Naive thymus-derived CD4-positive, alpha-beta T cell (primary cell): ENCODE measurements at regions of chr10 and their contacts with region 1.

Region 1: GRCh38 chr10:75111367-75111906 is at the start of gene SAMD8:
- DNase-seq: peak; percentile 90 to 98 (median 94)
- ATAC-seq: peak; percentile 92
- H3K4me3 ChIP-seq: peak within 1 kb of the TSS; percentile 90
- H3K4me3 Mint-ChIP-seq: peak within 1 kb of the TSS; percentile 81 to 98 (median 90)
- H3K27ac ChIP-seq: peak within 1 kb of the TSS; percentile 89
- H3K27ac Mint-ChIP-seq: peak within 1 kb of the TSS; percentile 86 to 98 (median 94)
- H3K4me1 ChIP-seq: peaks cover 14 to 16% of the 10 kb centered on the region in 2 donors
- H3K4me1 Mint-ChIP-seq: peaks cover 33 to 66% (median 62%) of the 10 kb centered on the region in 7 donors
- H3K27me3 ChIP-seq: no peaks in the 10 kb centered on the region
- H3K27me3 Mint-ChIP-seq: no peaks in the 10 kb centered on the region
- total RNA-seq, gene SAMD8: 14.8 to 31.7 (median 17.5) TPM

Region 2: DNA sequence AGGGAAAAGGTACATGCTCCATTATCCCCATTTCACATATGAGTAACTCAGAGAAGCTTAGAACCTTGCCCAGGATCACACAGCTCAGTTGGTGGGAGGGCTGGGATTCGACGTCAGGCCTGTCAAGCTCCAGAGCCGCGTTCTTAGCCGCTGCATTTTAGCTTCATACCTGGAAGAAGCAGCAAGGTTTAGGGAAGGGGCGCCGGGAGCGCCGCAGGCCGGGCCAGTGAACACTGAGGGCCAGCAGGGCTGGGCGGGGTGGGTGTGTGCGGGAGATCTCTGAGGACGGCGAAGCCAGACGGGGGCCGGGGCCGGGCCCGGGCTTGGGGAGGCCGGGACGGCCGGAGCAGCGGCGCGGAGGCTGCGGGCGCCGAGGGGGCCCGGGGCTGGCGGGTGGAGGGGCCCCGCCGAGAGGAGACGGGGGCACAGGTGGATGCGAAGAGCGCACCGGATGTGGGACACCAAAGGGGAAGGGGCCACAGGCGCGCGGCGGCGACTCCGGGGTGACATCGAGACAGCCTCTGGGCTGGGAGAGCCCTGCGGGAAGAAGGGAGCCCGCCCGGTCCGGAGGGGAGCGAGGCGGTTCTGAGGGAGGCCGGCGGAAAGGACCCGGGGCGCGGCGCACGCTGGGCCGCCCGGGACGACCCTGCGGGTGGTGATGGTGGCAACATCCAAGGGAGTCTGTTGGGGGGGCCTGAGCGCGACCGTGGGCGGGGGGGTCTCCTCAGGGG is 1300.5 kb before region 1 on chr10:
- CTCF ChIA-PET with region 1: no interaction called
- POLR2A ChIA-PET with region 1: no interaction called
- intact Hi-C with region 1: loop called in 1 of 2 experiments (anchors 2 kb)
- DNase-seq: peak; percentile 46 to 76 (median 71)
- ATAC-seq: peak; percentile 18
- H3K4me3 ChIP-seq: peak overlapping the region; percentile 69
- H3K4me3 Mint-ChIP-seq: peak overlapping the region; percentile 88 to 97 (median 94)
- H3K27ac ChIP-seq: peak overlapping the region; percentile 97
- H3K27ac Mint-ChIP-seq: peak overlapping the region; percentile 94 to 98 (median 96)
- H3K4me1 ChIP-seq: peaks cover 26 to 31% of the 10 kb centered on the region in 2 donors
- H3K4me1 Mint-ChIP-seq: peaks cover 31 to 54% (median 49%) of the 10 kb centered on the region in 7 donors
- H3K27me3 ChIP-seq: no peaks in the 10 kb centered on the region
- H3K27me3 Mint-ChIP-seq: no peaks in the 10 kb centered on the region

Region 3: GRCh38 chr10:73997787-73998622 is 1113.4 kb before region 1 on chr10 and contains the start of gene VCL:
- CTCF ChIA-PET with region 1: no interaction called
- POLR2A ChIA-PET with region 1: no interaction called
- intact Hi-C with region 1: loop called (anchors 2 to 10 kb)
- DNase-seq: peak; percentile 90 to 97 (median 95)
- ATAC-seq: peak; percentile 99
- H3K4me3 ChIP-seq: peak within 1 kb of the TSS; percentile 71
- H3K4me3 Mint-ChIP-seq: peak within 1 kb of the TSS; percentile 83 to 100 (median 97)
- H3K27ac ChIP-seq: peak within 1 kb of the TSS; percentile 91
- H3K27ac Mint-ChIP-seq: peak within 1 kb of the TSS; percentile 83 to 99 (median 98)
- H3K4me1 ChIP-seq: peaks cover 19 to 22% of the 10 kb centered on the region in 2 donors
- H3K4me1 Mint-ChIP-seq: peaks cover 43 to 53% (median 48%) of the 10 kb centered on the region in 7 donors
- H3K27me3 ChIP-seq: no peaks in the 10 kb centered on the region
- H3K27me3 Mint-ChIP-seq: no peaks in the 10 kb centered on the region
- total RNA-seq, gene VCL: 9.0 to 67.7 (median 21.6) TPM

Region 4: DNA sequence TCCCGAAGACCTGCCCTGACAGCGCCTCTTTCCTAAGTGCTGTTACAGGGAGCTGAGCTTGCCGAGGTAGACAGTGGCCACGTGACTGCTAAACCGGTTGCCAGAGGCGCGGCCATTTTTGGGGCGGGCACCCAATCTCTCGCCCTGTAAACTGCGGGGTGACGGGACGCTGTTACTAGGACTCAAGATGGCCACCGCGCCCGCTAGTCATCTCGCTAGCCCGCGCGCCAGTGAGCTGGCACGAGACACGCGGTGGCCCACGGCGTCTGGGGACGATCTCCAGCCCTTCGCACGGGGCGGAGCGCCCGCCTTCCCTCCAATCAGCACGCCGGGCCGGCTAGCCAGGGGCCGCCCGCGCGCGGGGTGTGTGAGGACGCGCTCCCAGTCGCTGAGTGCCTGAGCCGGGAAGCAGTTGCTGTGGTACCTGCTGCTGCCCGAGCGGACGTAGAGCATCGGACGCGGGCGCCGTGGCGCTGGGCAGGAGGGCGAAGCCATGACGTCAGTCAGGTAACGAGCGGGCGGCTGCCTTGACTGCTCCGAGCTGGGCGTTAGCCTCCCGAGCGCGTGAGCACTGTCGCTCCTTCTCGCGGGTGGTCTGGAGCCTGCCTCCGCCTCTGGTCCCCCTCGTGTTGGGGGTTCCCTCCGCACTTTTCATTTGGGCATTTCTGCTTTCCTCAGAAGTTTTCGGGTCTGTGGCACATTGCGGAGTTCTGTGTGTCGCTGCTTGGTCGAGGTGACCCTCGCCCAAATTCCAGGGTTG is 934.9 kb before region 1 on chr10:
- CTCF ChIA-PET with region 1: no interaction called
- POLR2A ChIA-PET with region 1: interaction called, 3 read pairs
- intact Hi-C with region 1: loop called in 1 of 2 experiments (anchors 2 kb)
- DNase-seq: peak; percentile 90 to 96 (median 95)
- ATAC-seq: peak; percentile 98
- H3K4me3 ChIP-seq: peak overlapping the region; percentile 84
- H3K4me3 Mint-ChIP-seq: peak overlapping the region; percentile 87 to 98 (median 93)
- H3K27ac ChIP-seq: peak overlapping the region; percentile 86
- H3K27ac Mint-ChIP-seq: peak overlapping the region; percentile 94 to 98 (median 97)
- H3K4me1 ChIP-seq: peaks cover 6 to 7% of the 10 kb centered on the region in 2 donors
- H3K4me1 Mint-ChIP-seq: peaks cover 14 to 46% (median 40%) of the 10 kb centered on the region in 7 donors
- H3K27me3 ChIP-seq: no peaks in the 10 kb centered on the region
- H3K27me3 Mint-ChIP-seq: no peaks in the 10 kb centered on the region

Region 5: DNA sequence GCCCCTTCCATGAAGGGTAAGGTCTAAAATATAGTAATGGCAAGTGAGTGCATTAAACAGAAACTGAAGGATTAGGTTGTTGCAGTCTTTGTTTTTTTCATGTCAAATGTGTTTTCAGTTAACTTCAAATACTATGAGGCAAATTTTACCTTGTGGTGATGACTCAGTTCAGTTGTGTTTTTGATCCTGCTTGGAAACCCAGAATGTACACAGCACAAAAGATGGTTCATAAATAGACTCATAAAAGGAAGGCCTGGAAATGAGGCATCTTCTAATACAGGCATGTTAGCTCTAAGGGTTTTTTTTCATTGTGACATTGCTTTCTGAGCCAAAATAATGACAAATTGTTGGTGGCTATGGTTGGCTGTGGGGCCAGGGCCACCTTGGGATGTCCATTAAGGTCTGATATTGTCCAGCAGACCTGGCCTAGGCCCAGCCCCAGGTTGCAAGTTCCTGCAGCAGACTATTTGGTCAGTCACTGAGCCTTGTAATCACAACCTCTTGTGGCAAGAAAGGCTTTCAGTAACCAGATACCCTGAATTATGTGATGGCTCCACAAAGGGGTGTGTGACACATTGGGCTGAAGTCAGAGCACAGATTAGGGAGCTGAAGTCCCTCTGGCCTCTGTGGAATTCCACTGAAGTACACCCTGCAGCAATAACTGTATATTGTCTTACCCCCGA is 69.0 kb before region 1 on chr10:
- CTCF ChIA-PET with region 1: no interaction called
- POLR2A ChIA-PET with region 1: interaction called, 3 read pairs
- intact Hi-C with region 1: loop called in 1 of 2 experiments (anchors 5 kb)
- DNase-seq: no peak
- ATAC-seq: no peak
- H3K4me3 ChIP-seq: no peak overlapping the region
- H3K4me3 Mint-ChIP-seq: no peak overlapping the region
- H3K27ac ChIP-seq: no peak overlapping the region
- H3K27ac Mint-ChIP-seq: peak overlapping the region in 1 of 9 donors; percentile 69
- H3K4me1 ChIP-seq: no peaks in the 10 kb centered on the region
- H3K4me1 Mint-ChIP-seq: peaks cover 3 to 38% (median 7%) of the 10 kb centered on the region in 7 donors
- H3K27me3 ChIP-seq: no peaks in the 10 kb centered on the region
- H3K27me3 Mint-ChIP-seq: peaks cover 0 to 18% (median 8%) of the 10 kb centered on the region in 5 donors

Region 6: DNA sequence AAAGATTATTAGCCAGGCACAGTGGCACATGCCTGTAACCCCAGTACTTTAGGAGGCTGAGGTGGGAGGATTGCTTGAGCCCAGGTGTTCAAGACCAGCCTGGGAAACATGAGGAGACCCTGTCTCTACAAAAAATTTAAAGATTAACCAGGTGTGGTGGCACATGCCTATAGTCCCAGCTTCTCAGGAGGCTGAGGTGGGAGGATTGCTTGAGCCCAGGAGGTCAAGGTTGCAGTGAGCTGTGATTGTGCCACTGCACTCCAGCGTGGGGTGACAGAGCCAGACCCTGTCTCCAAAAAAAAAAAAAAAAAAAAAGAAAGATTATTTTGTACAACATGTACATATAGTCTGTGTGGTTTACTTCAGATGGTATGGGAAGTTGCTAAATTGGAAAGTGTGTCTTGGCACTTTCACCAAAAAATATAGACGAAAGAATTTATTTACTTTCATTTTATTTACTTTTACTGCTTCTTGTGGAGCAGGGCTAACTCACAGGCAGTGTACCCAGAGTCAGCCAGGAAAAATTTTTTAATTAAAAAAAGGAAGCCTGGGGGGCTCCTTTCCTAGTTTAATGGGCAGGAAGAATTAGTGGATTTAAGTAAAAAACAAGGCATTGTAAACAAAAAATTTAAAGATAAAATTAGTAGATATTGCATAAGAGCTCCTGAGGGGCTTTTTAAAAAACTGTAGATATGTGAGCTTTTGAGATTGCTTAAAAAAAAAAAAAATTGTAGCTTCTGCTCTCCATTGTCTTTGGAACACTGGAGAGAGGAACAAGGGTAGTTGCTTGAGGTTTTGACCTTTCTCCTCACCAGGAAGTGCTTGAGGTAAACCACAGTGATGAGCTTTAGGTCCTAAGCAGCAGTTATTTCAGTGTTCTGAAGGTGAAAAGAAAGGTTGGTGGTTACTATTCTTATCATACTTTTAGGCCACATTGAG is 54.5 kb after region 1 on chr10:
- CTCF ChIA-PET with region 1: interaction called, 4 read pairs
- POLR2A ChIA-PET with region 1: no interaction called
- intact Hi-C with region 1: loop called (anchors 1 to 5 kb)
- DNase-seq: peak in 5 of 9 donors; percentile 7 to 35 (median 12)
- ATAC-seq: peak; percentile 75
- H3K4me3 ChIP-seq: peak overlapping the region; percentile 11
- H3K4me3 Mint-ChIP-seq: peak overlapping the region; percentile 64 to 86 (median 73)
- H3K27ac ChIP-seq: peak overlapping the region; percentile 66
- H3K27ac Mint-ChIP-seq: peak overlapping the region; percentile 78 to 91 (median 86)
- H3K4me1 ChIP-seq: peaks cover 22 to 31% of the 10 kb centered on the region in 2 donors
- H3K4me1 Mint-ChIP-seq: peaks cover 38 to 68% (median 50%) of the 10 kb centered on the region in 7 donors
- H3K27me3 ChIP-seq: no peaks in the 10 kb centered on the region
- H3K27me3 Mint-ChIP-seq: no peaks in the 10 kb centered on the region

Region 7: DNA sequence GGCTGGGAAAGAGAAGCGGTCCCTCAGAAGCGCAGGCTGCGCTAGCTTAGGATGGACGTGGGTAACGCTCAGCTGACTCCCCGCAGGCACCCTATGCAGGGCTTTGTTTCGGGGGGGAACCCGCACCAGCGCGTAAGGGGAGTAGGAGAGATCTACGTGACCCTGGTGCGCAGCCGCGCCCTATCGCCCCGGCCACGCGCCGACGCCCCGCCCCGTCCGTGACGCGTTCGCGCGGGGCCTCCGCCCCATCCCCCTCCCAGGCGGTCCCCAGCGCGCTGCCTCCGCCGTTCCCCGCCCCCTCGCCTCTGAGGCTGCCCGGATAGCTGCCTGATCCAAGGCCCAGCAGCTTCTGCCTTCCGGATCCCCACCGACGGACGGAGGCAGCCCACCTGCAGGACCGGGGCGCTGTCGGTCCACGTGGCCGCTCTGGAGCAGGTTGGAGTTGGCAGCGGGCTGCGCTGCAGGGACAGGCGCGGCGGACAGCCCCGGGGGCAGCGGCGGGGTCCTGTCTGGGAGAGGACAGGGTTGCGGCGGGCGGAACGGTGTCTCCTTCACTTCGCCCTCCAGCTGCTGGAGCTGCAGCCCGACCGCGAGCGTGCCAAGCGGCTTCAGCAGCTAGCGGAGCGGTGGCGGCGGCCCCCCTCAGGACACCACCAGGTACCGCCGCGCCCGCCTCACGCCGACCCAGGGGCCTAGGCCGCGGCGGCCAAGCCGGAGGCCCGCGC is 99.0 kb after region 1 on chr10 and contains the start of gene VDAC2:
- CTCF ChIA-PET with region 1: no interaction called
- POLR2A ChIA-PET with region 1: interaction called, 28 read pairs
- intact Hi-C with region 1: loop called (anchors 1 kb)
- DNase-seq: peak; percentile 92 to 100 (median 98)
- ATAC-seq: peak; percentile 92
- H3K4me3 ChIP-seq: peak within 1 kb of the TSS; percentile 81
- H3K4me3 Mint-ChIP-seq: peak within 1 kb of the TSS; percentile 87 to 100 (median 98)
- H3K27ac ChIP-seq: peak within 1 kb of the TSS; percentile 96
- H3K27ac Mint-ChIP-seq: peak within 1 kb of the TSS; percentile 99 to 100 (median 100)
- H3K4me1 ChIP-seq: peaks cover 15 to 21% of the 10 kb centered on the region in 2 donors
- H3K4me1 Mint-ChIP-seq: peaks cover 21 to 44% (median 29%) of the 10 kb centered on the region in 7 donors
- H3K27me3 ChIP-seq: no peaks in the 10 kb centered on the region
- H3K27me3 Mint-ChIP-seq: no peaks in the 10 kb centered on the region
- total RNA-seq, gene VDAC2: 82.8 to 138 (median 121) TPM